ENCODE measurements at regions of chr13 and their contacts with region 1.

Region 1: DNA sequence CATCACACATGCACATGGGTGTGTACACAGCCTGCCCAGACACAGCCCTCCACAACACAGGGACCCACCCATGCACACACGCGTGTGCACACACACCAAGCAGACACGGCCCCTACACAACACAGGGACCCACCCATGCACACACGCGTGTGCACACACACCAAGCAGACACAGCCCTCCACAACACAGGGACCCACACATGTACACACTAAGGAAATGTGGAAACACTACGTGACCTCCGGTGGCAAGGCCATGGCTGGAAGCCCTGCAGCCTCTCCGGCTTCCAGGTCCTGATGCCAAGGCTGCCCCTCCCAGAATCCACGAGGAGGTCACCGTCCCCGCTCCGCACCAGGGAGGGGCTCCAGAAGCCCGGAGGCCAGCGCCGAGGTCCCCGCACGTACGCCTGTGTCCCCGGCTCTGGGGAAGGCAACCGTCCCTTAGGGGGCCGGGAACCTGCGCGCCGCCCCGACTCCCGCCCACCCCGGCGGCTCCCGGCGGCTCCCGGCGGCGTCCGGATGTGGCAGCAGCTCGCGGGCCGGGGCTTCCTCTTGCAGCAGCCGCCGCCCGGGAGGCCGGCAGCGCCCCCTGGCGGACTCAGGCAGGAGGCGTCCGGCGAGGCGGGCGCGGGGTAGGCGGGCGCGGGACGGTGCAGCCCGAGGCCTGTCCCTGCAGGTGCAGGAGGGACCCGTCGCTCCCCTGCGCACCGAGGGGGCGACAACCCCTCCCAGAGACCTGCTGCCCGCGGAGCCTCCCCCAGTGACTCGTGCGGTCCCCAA is 29.8 kb upstream of the GRTP1 start:
- DNase-seq: peak; percentile 84
- H3K4me3 ChIP-seq: peak overlapping the region; percentile 77
- H3K27ac ChIP-seq: peak overlapping the region; percentile 17
- H3K4me1 ChIP-seq: peaks cover 5% of the 10 kb centered on the region
- CTCF ChIP-seq: peak; percentile 63

Region 2: DNA sequence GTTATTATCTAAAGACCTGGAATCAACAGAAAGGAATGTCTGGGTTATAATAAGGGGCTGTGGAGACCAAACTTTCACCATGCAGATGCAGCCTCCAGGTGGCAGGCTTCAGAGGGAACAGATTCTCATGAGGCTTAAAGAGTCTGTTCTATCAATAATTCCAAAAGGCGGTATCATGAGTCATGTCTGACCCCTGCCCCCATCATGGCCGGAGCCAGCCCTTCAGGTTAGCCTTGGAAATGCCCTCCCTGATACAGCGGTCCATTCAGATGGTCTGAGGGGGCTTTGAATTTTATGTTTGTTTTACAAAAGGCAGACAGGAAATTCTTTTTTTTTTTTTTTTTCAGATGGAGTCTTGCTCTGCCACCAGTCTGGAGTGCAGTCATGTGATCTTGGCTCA is 118.4 kb before region 1 on chr13:
- CTCF ChIA-PET with region 1: no interaction called
- POLR2A ChIA-PET with region 1: no interaction called
- intact Hi-C with region 1: loop called (anchors 5 kb)
- DNase-seq: peak; percentile 40
- H3K4me3 ChIP-seq: no peak overlapping the region
- H3K27ac ChIP-seq: no peak overlapping the region
- H3K4me1 ChIP-seq: no peaks in the 10 kb centered on the region
- CTCF ChIP-seq: peak; percentile 67

Region 3: DNA sequence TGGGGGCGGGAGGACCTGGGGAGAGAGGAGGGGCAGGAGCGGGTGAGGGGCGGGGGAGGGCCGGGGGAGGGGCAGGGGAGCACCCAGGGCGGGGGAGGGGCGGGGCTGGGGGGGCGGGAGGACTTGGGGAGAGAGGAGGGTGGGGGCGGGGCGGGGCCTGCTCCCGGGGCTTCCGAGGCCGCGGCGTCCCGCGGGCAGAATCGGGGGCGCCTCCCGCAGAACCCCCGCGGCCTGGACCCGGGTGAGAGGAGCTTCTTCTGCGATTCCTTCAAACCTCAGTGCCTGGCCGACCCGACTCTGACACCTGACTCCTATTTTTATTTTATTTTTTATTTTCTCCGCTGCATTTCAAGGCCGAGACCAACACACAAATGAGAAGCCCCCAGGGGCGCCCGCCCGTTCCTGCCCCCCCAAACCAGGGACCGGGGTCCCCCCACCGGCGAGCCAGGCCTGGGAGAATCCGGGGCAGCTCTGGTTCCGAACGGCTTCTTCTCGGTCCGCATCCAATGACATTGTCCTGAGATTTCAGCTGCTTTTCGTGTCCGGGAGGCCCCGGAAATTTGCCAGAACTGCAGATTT is 29.4 kb before region 1 on chr13:
- CTCF ChIA-PET with region 1: no interaction called
- POLR2A ChIA-PET with region 1: no interaction called
- intact Hi-C with region 1: no loop called
- DNase-seq: no peak
- H3K4me3 ChIP-seq: no peak overlapping the region
- H3K27ac ChIP-seq: no peak overlapping the region
- H3K4me1 ChIP-seq: no peaks in the 10 kb centered on the region
- CTCF ChIP-seq: no peak